ENCODE measurements at regions of chr12 and their contacts with region 1.

Region 1: DNA sequence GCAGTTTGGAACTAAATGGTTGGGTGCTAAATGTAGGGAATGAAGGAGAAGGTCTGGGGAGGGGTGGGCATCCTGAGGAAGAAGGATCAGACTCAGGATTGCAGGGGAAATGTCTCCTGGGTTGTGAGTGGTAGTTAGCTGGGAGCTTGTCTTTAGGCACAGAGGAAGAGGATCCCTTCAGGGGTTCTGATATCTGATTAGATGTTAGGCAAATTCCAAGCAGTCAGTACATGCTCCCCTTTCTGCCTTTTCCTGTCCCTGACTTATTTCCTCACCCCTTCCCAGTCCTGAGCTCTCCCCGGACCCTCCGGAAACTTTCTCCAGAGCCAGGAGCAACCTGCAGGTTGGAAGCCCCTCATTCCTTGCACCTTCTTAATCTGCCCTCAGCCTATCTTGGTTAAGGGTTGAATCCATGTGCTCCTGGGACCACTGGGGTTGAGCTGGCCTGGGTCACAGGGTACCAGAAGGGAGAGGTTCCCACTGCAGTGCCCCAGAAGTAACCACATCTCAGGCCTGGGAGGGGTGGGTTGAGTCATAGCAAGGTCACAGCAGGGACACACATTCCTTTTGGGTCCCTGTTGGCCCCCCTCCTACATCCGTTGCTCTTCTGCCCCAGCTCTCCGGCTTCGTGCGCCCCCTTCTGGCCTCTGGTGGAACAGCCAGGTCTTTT is 1.6 kb downstream of the IGFBP6 start:
- DNase-seq: peak; percentile 70 to 94 (median 89)
- ATAC-seq: peak; percentile 61
- H3K4me3 ChIP-seq: no peak overlapping the region
- H3K4me3 Mint-ChIP-seq: peak overlapping the region; percentile 79
- H3K27ac ChIP-seq: peak overlapping the region in 1 of 2 experiments; percentile 23
- H3K27ac Mint-ChIP-seq: peak overlapping the region; percentile 84
- H3K4me1 ChIP-seq: peaks cover 52% of the 10 kb centered on the region
- H3K4me1 Mint-ChIP-seq: peaks cover 48% of the 10 kb centered on the region
- H3K27me3 ChIP-seq: no peaks in the 10 kb centered on the region
- H3K27me3 Mint-ChIP-seq: no peaks in the 10 kb centered on the region
- CTCF ChIP-seq: peak; percentile 98

Region 2: GRCh38 chr12:53039851-53040250 is 59.3 kb before region 1 on chr12:
- CTCF ChIA-PET with region 1: interaction called, 5 read pairs
- POLR2A ChIA-PET with region 1: interaction called, 3 read pairs
- intact Hi-C with region 1: loop called in 1 of 2 experiments (anchors 2 kb)
- DNase-seq: no peak
- ATAC-seq: no peak
- H3K4me3 ChIP-seq: no peak overlapping the region
- H3K4me3 Mint-ChIP-seq: no peak overlapping the region
- H3K27ac ChIP-seq: no peak overlapping the region
- H3K27ac Mint-ChIP-seq: no peak overlapping the region
- H3K4me1 ChIP-seq: peaks cover 13% of the 10 kb centered on the region
- H3K4me1 Mint-ChIP-seq: peaks cover 11% of the 10 kb centered on the region
- H3K27me3 ChIP-seq: no peaks in the 10 kb centered on the region
- H3K27me3 Mint-ChIP-seq: no peaks in the 10 kb centered on the region
- CTCF ChIP-seq: no peak

Region 3: GRCh38 chr12:53047221-53048042 is 51.7 kb before region 1 on chr12:
- CTCF ChIA-PET with region 1: interaction called, 11 read pairs
- POLR2A ChIA-PET with region 1: interaction called, 4 read pairs
- intact Hi-C with region 1: loop called in 1 of 2 experiments (anchors 5 kb)
- DNase-seq: peak; percentile 45 to 85 (median 65)
- ATAC-seq: peak; percentile 85
- H3K4me3 ChIP-seq: peak overlapping the region; percentile 8 to 85
- H3K4me3 Mint-ChIP-seq: peak overlapping the region; percentile 69
- H3K27ac ChIP-seq: peak overlapping the region in 1 of 2 experiments; percentile 70
- H3K27ac Mint-ChIP-seq: peak overlapping the region; percentile 55
- H3K4me1 ChIP-seq: peaks cover 5% of the 10 kb centered on the region
- H3K4me1 Mint-ChIP-seq: peaks cover 11% of the 10 kb centered on the region
- H3K27me3 ChIP-seq: no peaks in the 10 kb centered on the region
- H3K27me3 Mint-ChIP-seq: no peaks in the 10 kb centered on the region
- CTCF ChIP-seq: no peak

Region 4: GRCh38 chr12:53054112-53054833 is 44.8 kb before region 1 on chr12:
- CTCF ChIA-PET with region 1: interaction called, 16 read pairs
- POLR2A ChIA-PET with region 1: interaction called, 9 read pairs
- intact Hi-C with region 1: loop called in 1 of 2 experiments (anchors 5 kb)
- DNase-seq: peak; percentile 81 to 97 (median 93)
- ATAC-seq: peak; percentile 92
- H3K4me3 ChIP-seq: peak overlapping the region; percentile 82 to 94
- H3K4me3 Mint-ChIP-seq: peak overlapping the region; percentile 94
- H3K27ac ChIP-seq: peak overlapping the region; percentile 51 to 57
- H3K27ac Mint-ChIP-seq: peak overlapping the region; percentile 91
- H3K4me1 ChIP-seq: peaks cover 7% of the 10 kb centered on the region
- H3K4me1 Mint-ChIP-seq: peaks cover 13% of the 10 kb centered on the region
- H3K27me3 ChIP-seq: no peaks in the 10 kb centered on the region
- H3K27me3 Mint-ChIP-seq: no peaks in the 10 kb centered on the region
- CTCF ChIP-seq: no peak

Region 5: DNA sequence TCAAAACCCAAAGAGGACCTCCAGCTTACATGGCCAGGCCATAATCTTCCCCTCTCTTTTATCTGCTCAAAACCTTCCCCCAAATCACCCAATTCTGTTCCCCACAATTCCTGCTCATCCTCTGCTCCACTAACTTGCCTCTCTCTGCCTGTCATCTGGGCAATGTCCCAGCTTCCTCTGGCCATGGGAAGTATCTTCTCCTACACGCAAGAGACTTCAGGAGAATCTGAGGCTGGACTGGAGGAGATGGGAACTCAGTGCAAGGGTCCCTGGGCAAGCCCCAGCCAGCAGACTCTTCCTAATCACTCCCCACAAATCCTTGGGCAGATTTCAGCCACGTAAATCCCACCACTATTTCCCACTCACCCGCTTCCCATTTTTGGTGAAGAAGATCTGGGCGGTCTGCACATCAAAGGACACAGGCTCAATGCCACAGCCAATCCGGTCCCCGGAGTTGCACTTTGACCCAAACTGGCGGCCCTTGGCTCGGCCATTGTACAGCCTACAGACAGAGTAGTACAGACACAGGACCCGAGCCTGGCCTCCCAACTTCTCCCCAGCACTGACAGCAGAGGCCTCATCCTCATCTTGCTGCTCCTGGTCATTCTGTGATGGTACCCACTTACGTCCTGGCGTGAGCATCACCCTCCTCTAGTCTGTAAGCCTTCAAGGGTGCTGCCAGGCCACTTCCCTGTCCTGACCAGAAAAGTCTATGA is 24.7 kb before region 1 on chr12:
- CTCF ChIA-PET with region 1: interaction called, 366 read pairs
- POLR2A ChIA-PET with region 1: interaction called, 24 read pairs
- intact Hi-C with region 1: loop called (anchors 1 kb)
- DNase-seq: no peak
- ATAC-seq: no peak
- H3K4me3 ChIP-seq: no peak overlapping the region
- H3K4me3 Mint-ChIP-seq: no peak overlapping the region
- H3K27ac ChIP-seq: no peak overlapping the region
- H3K27ac Mint-ChIP-seq: peak overlapping the region; percentile 34
- H3K4me1 ChIP-seq: peaks cover 13% of the 10 kb centered on the region
- H3K4me1 Mint-ChIP-seq: peaks cover 44% of the 10 kb centered on the region
- H3K27me3 ChIP-seq: no peaks in the 10 kb centered on the region
- H3K27me3 Mint-ChIP-seq: no peaks in the 10 kb centered on the region
- CTCF ChIP-seq: no peak

Region 6: GRCh38 chr12:53079226-53080117 is 19.6 kb before region 1 on chr12 and contains the start of gene SPRYD3:
- CTCF ChIA-PET with region 1: interaction called, 23 read pairs
- POLR2A ChIA-PET with region 1: interaction called, 24 read pairs
- intact Hi-C with region 1: loop called (anchors 1 kb)
- DNase-seq: peak; percentile 95 to 98 (median 96)
- ATAC-seq: peak; percentile 94
- H3K4me3 ChIP-seq: peak within 1 kb of the TSS; percentile 66 to 92
- H3K4me3 Mint-ChIP-seq: peak within 1 kb of the TSS; percentile 92
- H3K27ac ChIP-seq: peak within 1 kb of the TSS; percentile 75 to 89
- H3K27ac Mint-ChIP-seq: peak within 1 kb of the TSS; percentile 96
- H3K4me1 ChIP-seq: peaks cover 13% of the 10 kb centered on the region
- H3K4me1 Mint-ChIP-seq: peaks cover 41% of the 10 kb centered on the region
- H3K27me3 ChIP-seq: no peaks in the 10 kb centered on the region
- H3K27me3 Mint-ChIP-seq: no peaks in the 10 kb centered on the region
- CTCF ChIP-seq: no peak
- total RNA-seq, gene SPRYD3: 25.1 to 25.6 TPM

Region 7: GRCh38 chr12:53287741-53288216 is 188.7 kb after region 1 on chr12:
- CTCF ChIA-PET with region 1: interaction called, 5 read pairs
- POLR2A ChIA-PET with region 1: no interaction called
- intact Hi-C with region 1: loop called in 1 of 2 experiments (anchors 1 kb)
- DNase-seq: peak; percentile 42 to 86 (median 75)
- ATAC-seq: peak; percentile 96
- H3K4me3 ChIP-seq: no peak overlapping the region
- H3K4me3 Mint-ChIP-seq: no peak overlapping the region
- H3K27ac ChIP-seq: no peak overlapping the region
- H3K27ac Mint-ChIP-seq: no peak overlapping the region
- H3K4me1 ChIP-seq: no peaks in the 10 kb centered on the region
- H3K4me1 Mint-ChIP-seq: peaks cover 4% of the 10 kb centered on the region
- H3K27me3 ChIP-seq: no peaks in the 10 kb centered on the region
- H3K27me3 Mint-ChIP-seq: no peaks in the 10 kb centered on the region
- CTCF ChIP-seq: peak; percentile 62

Region 8: DNA sequence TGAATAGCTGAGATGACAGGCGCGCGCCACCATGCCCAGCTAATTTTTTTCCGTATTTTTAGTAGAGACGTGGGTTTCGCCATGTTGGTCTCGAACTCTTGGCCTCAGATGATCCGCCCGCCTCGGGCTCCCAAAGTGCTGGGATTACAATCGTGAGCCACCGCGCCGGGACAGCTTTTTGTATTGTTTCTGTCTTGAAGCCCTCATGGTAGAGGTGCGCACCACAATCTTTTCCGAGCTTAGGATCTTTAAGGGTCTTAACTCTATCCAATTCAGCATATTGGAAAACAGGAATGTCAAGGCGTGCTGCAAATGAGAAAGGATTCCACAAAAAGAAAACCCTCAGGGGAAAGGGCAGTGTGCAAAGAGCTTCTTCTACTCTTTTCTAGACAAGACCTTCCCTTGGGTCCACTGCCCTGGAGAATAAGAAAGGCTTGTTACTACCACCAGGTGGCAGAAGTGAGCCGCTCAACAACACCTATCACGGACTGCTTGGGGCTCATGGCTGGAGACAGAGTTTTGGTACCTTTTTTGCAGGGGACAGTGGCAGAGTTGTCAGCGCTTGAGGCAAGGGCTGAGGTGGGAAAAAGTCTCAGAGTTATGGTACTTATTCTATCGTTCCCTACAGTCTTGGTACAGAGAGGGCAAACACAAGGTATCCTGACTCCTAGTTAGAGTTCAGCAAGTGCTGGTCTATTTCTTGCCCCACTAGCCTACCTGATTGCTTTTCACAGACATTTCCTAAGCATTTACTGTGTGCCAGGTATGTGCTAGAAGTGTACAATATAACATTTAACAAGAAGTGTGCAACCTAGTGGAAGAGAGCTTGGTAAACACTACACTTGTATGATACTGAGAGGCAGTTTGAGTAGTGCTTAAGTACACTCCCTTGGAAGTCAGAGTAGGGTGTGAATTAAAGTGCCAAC is 253.5 kb after region 1 on chr12:
- CTCF ChIA-PET with region 1: no interaction called
- POLR2A ChIA-PET with region 1: no interaction called
- intact Hi-C with region 1: no loop called
- DNase-seq: peak; percentile 67 to 92 (median 82)
- ATAC-seq: peak; percentile 100
- H3K4me3 ChIP-seq: no peak overlapping the region
- H3K4me3 Mint-ChIP-seq: no peak overlapping the region
- H3K27ac ChIP-seq: no peak overlapping the region
- H3K27ac Mint-ChIP-seq: peak overlapping the region; percentile 8
- H3K4me1 ChIP-seq: no peaks in the 10 kb centered on the region
- H3K4me1 Mint-ChIP-seq: peaks cover 6% of the 10 kb centered on the region
- H3K27me3 ChIP-seq: no peaks in the 10 kb centered on the region
- H3K27me3 Mint-ChIP-seq: no peaks in the 10 kb centered on the region
- CTCF ChIP-seq: peak; percentile 75